ENCODE measurements at regions of chr7 and their contacts with region 1.

Region 1: GRCh38 chr7:2451171-2452073 is 24.8 kb downstream of the GRIFIN start:
- DNase-seq: peak; percentile 61
- ATAC-seq: peak; percentile 98
- H3K4me3 ChIP-seq: peak overlapping the region; percentile 23 to 48
- H3K27ac ChIP-seq: peak overlapping the region; percentile 39; the same call in 1 of the 2 replicates
- H3K4me1 ChIP-seq: peaks cover 10 to 15% of the 10 kb centered on the region in 2 experiments; a peak in 3 of 4 replicates
- H3K27me3 ChIP-seq: no peaks in the 10 kb centered on the region
- CTCF ChIP-seq: peak; percentile 87 to 93 (median 91)
- POLR2A ChIP-seq: no peak
- RAD21 ChIP-seq: peak; percentile 98

Region 2: DNA sequence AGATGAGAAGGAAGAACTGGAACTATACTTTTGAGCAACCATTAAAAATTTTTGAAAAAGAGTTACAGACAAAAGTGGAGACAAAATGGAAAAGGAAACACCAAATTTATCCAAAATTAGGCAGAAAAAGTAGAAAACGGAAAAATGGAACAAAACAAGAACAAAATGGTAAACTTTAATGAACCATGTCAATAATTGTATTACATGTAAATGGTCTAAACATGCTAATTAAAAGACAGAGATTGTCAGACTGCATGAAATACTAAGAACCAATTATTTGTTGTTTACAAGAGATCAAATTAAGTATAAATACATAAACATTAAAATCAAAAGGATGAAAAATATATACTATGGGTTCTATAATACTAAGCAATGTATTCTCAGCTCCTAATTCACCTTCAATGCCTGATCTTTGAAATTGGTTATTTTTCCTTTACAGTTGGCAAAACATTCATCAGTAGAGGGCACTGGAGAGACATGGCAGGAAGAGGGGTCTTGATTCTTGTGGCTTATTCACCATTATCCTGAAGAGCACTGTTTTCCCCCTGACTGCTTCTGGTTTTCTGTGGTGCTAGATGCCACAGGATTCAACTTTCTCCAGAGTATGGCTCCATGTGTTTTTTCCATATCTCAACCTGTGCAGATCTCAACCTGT is 656.4 kb before region 1 on chr7:
- CTCF ChIA-PET with region 1: no interaction called
- POLR2A ChIA-PET with region 1: no interaction called
- RAD21 ChIA-PET with region 1: no interaction called
- intact Hi-C with region 1: no loop called
- DNase-seq: no peak
- ATAC-seq: no peak
- H3K4me3 ChIP-seq: no peak overlapping the region
- H3K27ac ChIP-seq: no peak overlapping the region
- H3K4me1 ChIP-seq: no peaks in the 10 kb centered on the region
- H3K27me3 ChIP-seq: no peaks in the 10 kb centered on the region
- CTCF ChIP-seq: peak in 2 of 3 experiments; percentile 21 to 29; a peak in 2 of 6 replicates
- POLR2A ChIP-seq: no peak
- RAD21 ChIP-seq: peak; percentile 39; the same call in 1 of the 2 replicates

Region 3: GRCh38 chr7:2471396-2471795 is 20.0 kb after region 1 on chr7:
- CTCF ChIA-PET with region 1: interaction called, 63 read pairs
- POLR2A ChIA-PET with region 1: interaction called, 4 read pairs
- RAD21 ChIA-PET with region 1: interaction called, 10 to 12 read pairs
- intact Hi-C with region 1: loop called (anchors 1 kb)
- DNase-seq: no peak
- ATAC-seq: no peak
- H3K4me3 ChIP-seq: no peak overlapping the region
- H3K27ac ChIP-seq: no peak overlapping the region
- H3K4me1 ChIP-seq: peaks cover 4 to 15% of the 10 kb centered on the region in 2 experiments; a peak in 2 of 4 replicates
- H3K27me3 ChIP-seq: no peaks in the 10 kb centered on the region
- CTCF ChIP-seq: no peak
- POLR2A ChIP-seq: no peak
- RAD21 ChIP-seq: no peak

Region 4: GRCh38 chr7:2680792-2681490 is 229.5 kb after region 1 on chr7:
- CTCF ChIA-PET with region 1: interaction called, 19 read pairs
- POLR2A ChIA-PET with region 1: no interaction called
- RAD21 ChIA-PET with region 1: no interaction called
- intact Hi-C with region 1: loop called (anchors 1 kb)
- DNase-seq: peak; percentile 56
- ATAC-seq: peak; percentile 96
- H3K4me3 ChIP-seq: no peak overlapping the region
- H3K27ac ChIP-seq: no peak overlapping the region; the same call in 1 of the 2 replicates
- H3K4me1 ChIP-seq: peaks cover 0 to 4% of the 10 kb centered on the region in 2 experiments; a peak in 1 of 4 replicates
- H3K27me3 ChIP-seq: no peaks in the 10 kb centered on the region
- CTCF ChIP-seq: peak; percentile 73 to 87 (median 81)
- POLR2A ChIP-seq: no peak
- RAD21 ChIP-seq: peak; percentile 87

Region 5: GRCh38 chr7:2709553-2710285 is 258.3 kb after region 1 on chr7:
- CTCF ChIA-PET with region 1: interaction called, 15 read pairs
- POLR2A ChIA-PET with region 1: interaction called, 3 read pairs
- RAD21 ChIA-PET with region 1: interaction called in 1 of 2 experiments, 6 read pairs
- intact Hi-C with region 1: no loop called
- DNase-seq: peak; percentile 26
- ATAC-seq: peak; percentile 98
- H3K4me3 ChIP-seq: no peak overlapping the region
- H3K27ac ChIP-seq: no peak overlapping the region
- H3K4me1 ChIP-seq: peaks cover 2 to 5% of the 10 kb centered on the region in 2 experiments
- H3K27me3 ChIP-seq: no peaks in the 10 kb centered on the region
- CTCF ChIP-seq: peak; percentile 85 to 97 (median 92)
- POLR2A ChIP-seq: no peak
- RAD21 ChIP-seq: peak; percentile 93

Region 6: DNA sequence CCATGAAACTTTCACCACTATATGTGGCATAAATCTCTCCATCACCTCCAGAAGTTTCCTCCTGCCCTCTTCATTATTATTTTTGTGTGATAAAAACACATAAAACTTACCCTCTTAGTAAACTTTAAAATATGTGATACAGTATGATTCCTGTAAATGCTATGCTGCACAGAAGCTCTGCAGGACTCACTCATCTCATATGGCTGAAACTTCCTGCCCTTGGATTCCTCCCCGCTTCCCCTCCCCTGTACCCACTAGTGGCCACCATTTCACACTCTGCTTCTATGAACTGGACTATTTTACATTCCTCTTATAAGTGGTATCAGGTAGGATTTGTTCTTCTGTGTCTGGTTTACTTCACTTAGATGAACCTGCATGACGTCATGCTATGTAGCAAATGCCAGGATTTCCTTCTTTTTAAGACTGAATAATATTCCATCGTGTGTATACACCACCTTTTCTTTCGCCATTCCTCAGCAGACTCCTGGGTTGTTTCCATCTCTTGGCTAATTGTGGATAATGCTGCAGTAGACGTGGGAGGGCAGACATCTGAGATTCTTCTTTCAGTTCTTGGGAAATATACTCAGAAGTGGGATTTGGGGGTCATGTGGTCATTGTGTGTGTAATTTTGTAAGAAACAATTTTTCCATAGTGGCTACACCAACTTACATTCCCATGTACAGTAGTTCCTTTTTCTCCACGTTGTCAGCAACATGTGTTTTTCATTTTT is 1184.9 kb after region 1 on chr7:
- CTCF ChIA-PET with region 1: no interaction called
- POLR2A ChIA-PET with region 1: no interaction called
- RAD21 ChIA-PET with region 1: no interaction called
- intact Hi-C with region 1: no loop called
- DNase-seq: no peak
- ATAC-seq: no peak
- H3K4me3 ChIP-seq: no peak overlapping the region
- H3K27ac ChIP-seq: no peak overlapping the region
- H3K4me1 ChIP-seq: no peaks in the 10 kb centered on the region
- H3K27me3 ChIP-seq: peaks cover 6% of the 10 kb centered on the region; the same call in 1 of the 2 replicates
- CTCF ChIP-seq: no peak
- POLR2A ChIP-seq: no peak
- RAD21 ChIP-seq: no peak

Measured in HCT116 (cell line).